Activated CD4-positive, alpha-beta T cell treated with anti-CD3 and anti-CD28 coated beads, Interleukin-2, amount 10 ng/mL, durations not matched to agents 24 days and 14 days (primary cell): ENCODE measurements at regions of chr12 and their contacts with region 1.

Region 1: DNA sequence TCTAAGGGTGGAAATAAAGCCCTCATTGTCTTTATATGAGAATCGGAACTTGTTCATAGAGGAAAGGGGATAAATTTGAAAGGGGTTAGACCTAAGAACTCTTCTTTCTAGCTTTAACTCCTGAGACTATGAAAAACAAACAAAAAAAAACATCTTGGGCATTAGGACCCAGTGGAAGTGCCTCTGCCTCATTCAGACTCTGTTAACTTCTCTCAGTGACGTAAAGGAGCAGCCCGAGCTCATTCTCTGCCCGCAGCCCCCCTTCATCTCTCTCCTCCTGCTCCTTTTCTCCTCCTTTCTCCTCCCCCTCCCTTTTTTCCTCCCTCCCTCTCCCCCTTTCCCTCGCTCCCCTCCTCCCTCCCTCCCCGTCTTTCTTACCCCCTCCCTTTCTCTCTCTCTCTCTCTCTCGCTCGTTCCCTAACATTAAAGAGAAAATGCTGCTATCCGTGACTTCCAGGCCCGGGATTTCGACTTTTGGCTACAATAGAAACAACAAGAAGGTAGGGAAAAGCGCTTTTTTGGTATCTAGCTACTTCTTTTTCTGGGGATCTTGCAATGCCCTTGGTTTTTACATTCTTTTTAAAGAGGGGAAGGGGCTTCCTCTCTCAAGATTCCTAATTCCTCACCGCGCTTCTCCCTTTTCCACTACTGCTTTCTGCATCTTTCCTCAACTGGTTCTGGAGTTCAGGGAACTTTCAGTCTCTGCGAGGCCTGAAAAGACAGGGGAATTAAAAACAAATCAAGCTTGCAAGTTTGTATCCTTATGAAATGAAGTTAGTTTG is at the start of gene RBMS2:
- DNase-seq: peak; percentile 81
- H3K4me3 Mint-ChIP-seq: peak within 1 kb of the TSS; percentile 93
- H3K27ac Mint-ChIP-seq: peak within 1 kb of the TSS; percentile 75
- H3K4me1 Mint-ChIP-seq: peaks cover 29% of the 10 kb centered on the region
- H3K27me3 Mint-ChIP-seq: no peaks in the 10 kb centered on the region
- total RNA-seq, gene RBMS2: 4.1 and 5.8 TPM in 2 replicates

Region 2: DNA sequence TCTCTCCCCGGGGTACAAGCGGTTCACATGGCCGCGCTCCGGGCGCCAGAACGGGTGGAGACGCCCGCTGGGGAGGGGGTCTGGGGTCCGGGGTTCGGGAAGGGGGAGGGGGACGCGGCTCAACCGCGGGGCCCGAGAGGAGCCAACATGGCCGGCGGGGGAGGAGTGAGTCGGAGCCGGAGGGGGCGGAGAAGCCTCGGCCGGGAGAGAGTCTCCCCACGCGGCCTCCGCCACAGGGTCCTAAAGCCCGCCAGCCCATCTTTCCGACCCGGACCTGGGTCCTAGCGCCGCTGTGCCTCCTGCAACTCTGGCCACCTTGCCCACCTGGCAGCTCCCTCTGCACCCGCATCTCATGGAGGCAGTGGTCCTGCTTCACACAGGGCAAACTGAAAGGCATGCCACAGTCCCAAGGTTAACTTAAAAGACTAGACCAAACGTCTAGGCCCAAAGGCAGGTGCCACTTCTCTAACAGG is 108.4 kb after region 1 on chr12 and contains the start of gene BAZ2A:
- intact Hi-C with region 1: loop called (anchors 2 kb)
- DNase-seq: peak; percentile 96
- H3K4me3 Mint-ChIP-seq: peak within 1 kb of the TSS; percentile 98
- H3K27ac Mint-ChIP-seq: peak within 1 kb of the TSS; percentile 97
- H3K4me1 Mint-ChIP-seq: peaks cover 66% of the 10 kb centered on the region
- H3K27me3 Mint-ChIP-seq: no peaks in the 10 kb centered on the region
- total RNA-seq, gene BAZ2A: 117 and 118 TPM in 2 replicates